PC-3 (cell line): ENCODE measurements at regions of chr7 and their contacts with region 1.

Region 1: DNA sequence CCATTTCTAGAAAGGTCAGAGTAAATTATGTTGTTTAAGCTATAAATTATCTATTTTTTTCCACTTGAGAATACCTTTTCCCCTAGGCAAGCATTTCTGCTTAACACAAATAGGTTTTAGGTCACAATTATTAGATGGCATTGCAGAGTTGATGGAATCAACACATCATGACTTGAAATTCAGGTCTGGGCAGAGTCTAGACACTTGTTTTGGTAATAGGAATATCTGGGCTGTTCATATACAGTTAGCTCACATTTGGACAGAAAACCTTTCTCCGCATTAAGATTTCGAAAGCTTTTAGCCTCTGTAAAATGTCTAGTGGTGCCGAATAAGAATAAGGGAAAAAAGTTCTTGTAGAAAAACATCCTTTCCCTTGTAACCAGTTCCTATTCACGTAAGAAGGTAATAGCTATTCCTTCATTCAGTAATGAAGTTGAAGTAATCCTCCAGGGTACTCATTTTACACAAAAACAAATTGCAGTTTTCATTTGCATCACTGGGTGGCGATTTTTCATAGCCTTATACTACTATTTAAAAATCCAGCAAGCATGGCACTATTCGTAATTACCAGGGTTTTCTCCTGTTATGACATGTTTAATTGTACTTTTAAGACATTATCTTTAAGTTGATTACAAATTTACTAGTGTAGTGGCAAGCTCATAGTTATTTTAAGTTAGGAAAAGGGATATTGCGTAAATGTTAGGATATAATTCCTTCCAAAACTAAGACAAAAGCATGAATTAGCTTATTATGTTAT is 37.0 kb downstream of the RPA3 start:
- DNase-seq: peak; percentile 80
- ATAC-seq: peak; percentile 93
- H3K4me3 ChIP-seq: peak overlapping the region; percentile 16; the same call in 1 of the 2 replicates
- H3K27ac ChIP-seq: no peak overlapping the region
- H3K4me1 ChIP-seq: peaks cover 11% of the 10 kb centered on the region
- H3K27me3 ChIP-seq: no peaks in the 10 kb centered on the region
- CTCF ChIP-seq: peak; percentile 81

Region 2: DNA sequence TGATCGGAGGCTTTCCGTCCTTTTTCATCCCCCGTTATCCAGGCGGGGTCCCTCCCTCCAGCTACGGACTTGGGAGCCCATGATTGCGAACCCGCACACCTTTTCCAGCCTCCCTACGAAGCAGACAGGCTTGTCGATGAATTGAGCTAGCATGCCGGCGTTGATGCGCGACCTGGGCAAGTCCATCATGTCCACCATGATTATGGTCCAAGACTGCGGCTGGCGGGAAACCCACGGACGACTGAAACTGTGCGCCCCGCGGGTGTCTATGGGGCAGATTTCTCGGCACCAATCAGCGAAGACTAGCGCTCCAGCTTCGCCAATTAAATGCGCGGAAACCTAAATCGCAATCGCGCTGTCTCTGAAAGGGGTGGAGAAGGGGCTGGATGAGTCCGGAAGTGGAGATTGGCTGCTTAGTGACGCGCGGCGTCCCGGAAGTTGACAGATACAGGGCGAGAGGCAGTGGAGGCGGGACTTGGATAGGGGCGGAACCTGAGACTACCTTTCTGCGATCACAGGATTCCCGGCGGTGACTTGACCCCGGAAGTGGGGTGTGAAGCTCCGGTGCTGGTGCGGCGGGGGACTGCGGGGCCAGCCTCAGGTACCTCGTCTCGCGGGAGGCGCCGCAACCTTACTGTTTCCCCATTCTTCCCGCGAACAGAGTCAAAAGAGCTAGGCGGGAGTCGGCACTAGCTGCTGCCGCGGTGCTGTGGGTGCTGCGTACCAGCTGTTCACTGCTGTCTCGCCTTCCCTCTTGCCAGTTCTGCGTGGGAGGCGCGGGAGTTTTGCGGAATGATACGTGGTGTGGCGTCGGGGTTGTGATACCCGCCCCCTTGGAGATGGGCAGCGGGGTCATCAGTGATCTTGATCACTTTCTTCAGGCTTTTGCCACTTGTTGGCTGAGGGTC is 40.9 kb before region 1 on chr7 and contains the start of gene UMAD1:
- CTCF ChIA-PET with region 1: interaction called, 3 read pairs
- POLR2A ChIA-PET with region 1: no interaction called
- intact Hi-C with region 1: loop called (anchors 2 kb)
- DNase-seq: peak; percentile 99
- ATAC-seq: peak; percentile 96
- H3K4me3 ChIP-seq: peak within 1 kb of the TSS; percentile 83
- H3K27ac ChIP-seq: peak within 1 kb of the TSS; percentile 50
- H3K4me1 ChIP-seq: peaks cover 20% of the 10 kb centered on the region; the same call in 1 of the 2 replicates
- H3K27me3 ChIP-seq: no peaks in the 10 kb centered on the region
- CTCF ChIP-seq: no peak
- total RNA-seq, gene UMAD1: 6.0 and 8.9 TPM in 2 replicates

Region 3: DNA sequence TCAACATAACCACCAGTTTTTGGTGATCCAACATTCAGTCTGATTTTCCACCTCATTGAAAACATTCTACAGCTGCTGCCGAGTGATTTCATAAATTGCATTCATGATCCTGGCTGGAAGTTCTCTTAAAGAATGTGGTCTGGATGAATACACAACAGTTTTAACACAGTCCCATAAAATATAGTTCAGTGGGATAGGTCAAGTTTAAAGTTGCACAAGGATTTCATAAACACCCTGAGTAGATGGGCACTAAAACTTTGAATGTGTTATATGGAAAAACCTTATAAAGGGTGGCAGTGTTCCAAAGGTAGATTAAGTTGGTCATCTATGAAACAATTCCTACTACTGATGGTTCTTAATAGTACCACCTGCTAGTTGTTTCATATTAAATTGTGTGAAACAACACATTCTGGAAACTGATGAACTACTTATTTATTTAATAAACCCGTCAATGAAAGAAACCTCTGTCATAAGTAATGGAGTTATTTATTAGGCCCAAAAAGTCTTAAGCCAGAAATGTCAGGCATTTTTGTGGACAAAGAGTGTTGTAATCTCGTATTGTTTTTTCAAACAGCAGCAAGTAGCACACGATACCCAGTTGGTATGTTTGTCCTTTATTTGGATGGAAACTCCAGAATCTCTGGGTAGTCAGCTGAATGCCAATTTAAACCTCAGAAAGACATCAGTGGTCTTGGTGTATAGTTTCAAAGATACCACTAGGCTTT is 51.4 kb after region 1 on chr7:
- CTCF ChIA-PET with region 1: interaction called, 11 read pairs
- POLR2A ChIA-PET with region 1: no interaction called
- intact Hi-C with region 1: loop called (anchors 5 kb)
- DNase-seq: peak; percentile 42
- ATAC-seq: peak; percentile 64
- H3K4me3 ChIP-seq: no peak overlapping the region
- H3K27ac ChIP-seq: no peak overlapping the region
- H3K4me1 ChIP-seq: peaks cover 14% of the 10 kb centered on the region
- H3K27me3 ChIP-seq: no peaks in the 10 kb centered on the region
- CTCF ChIP-seq: no peak

Region 4: DNA sequence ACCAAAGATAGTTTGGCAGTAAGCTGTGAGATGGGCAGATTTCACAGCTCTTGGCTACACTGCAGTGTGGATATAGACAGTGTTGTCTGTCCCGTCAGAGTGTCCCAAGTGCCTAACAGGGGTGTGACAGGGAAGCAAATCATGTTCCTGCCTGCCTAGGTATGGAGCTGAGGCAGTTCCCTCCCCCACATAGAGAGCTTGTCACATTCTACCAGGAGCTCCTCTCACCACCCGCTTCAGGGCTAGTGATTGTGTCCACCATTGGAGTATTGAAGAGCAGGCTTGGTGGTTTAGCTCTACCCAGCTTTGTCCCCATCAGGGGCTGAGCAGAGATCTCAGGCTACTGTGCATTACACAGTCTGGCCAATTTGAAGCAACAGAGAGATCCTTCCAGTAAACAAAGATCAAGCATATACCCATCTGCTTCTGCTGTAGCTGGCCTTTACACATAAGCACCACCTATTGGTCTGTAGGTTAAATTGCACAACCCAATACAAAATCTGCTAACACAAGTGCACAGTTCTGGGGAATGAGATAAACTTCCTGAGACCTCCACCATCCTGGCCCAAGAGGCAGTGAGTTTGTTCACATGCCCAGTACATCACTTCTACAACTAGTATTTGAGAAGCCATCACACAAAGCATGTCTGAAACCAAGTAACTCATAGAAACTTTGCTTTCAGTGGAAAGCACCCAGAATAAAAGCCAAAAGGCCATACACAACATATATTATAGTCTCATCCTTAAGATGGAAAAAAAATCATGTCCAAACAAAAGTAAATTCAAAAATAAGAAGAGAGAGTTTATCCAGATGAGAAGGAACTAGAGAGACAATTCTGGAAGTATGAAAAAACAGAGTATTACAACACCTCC is 354.5 kb after region 1 on chr7:
- CTCF ChIA-PET with region 1: interaction called, 3 read pairs
- POLR2A ChIA-PET with region 1: no interaction called
- intact Hi-C with region 1: loop called (anchors 2 kb)
- DNase-seq: peak; percentile 41
- ATAC-seq: peak; percentile 95
- H3K4me3 ChIP-seq: no peak overlapping the region
- H3K27ac ChIP-seq: no peak overlapping the region
- H3K4me1 ChIP-seq: 0 out of 2 replicates have a peak, but pooled peaks cover 8% of the 10 kb centered on the region
- H3K27me3 ChIP-seq: no peaks in the 10 kb centered on the region
- CTCF ChIP-seq: peak; percentile 74

Region 5: GRCh38 chr7:8190119-8190895 is 508.9 kb after region 1 on chr7:
- CTCF ChIA-PET with region 1: interaction called, 6 read pairs
- POLR2A ChIA-PET with region 1: no interaction called
- intact Hi-C with region 1: loop called (anchors 5 kb)
- DNase-seq: peak; percentile 66
- ATAC-seq: peak; percentile 84
- H3K4me3 ChIP-seq: no peak overlapping the region
- H3K27ac ChIP-seq: no peak overlapping the region
- H3K4me1 ChIP-seq: no peaks in the 10 kb centered on the region
- H3K27me3 ChIP-seq: no peaks in the 10 kb centered on the region
- CTCF ChIP-seq: peak; percentile 83